ENCODE measurements at regions of chr17 and their contacts with region 1.

Region 1: GRCh38 chr17:1186923-1187771 is 7.4 kb upstream of the ABR start:
- DNase-seq: peak; percentile 74
- H3K4me3 ChIP-seq: no peak overlapping the region
- H3K27ac ChIP-seq: no peak overlapping the region
- H3K4me1 ChIP-seq: peaks cover 18% of the 10 kb centered on the region
- H3K27me3 ChIP-seq: no peaks in the 10 kb centered on the region
- CTCF ChIP-seq: peak; percentile 95 to 99

Region 2: DNA sequence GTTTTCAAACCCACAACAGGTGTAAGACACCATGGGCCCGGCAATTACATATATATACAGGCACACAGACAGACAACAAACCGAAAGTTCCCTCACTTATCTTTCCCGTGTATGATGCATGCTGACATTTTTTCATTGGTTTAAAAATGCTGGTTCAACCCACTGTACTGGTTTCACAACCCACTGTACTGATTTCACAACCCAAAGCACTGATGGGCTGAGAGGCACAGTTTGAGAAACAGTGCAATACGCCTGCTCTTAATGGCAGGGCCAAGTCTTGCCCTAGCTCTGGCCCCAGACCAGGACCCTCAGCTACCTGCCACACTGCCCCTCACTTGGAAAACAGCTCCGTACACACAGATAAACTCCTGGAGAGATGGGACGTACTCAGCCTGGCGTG is 88.8 kb before region 1 on chr17:
- CTCF ChIA-PET with region 1: no interaction called
- dilution Hi-C with region 1: no loop called
- in situ Hi-C with region 1: no loop called
- intact Hi-C with region 1: no loop called
- DNase-seq: peak; percentile 29
- H3K4me3 ChIP-seq: no peak overlapping the region
- H3K27ac ChIP-seq: no peak overlapping the region
- H3K4me1 ChIP-seq: no peaks in the 10 kb centered on the region
- H3K27me3 ChIP-seq: no peaks in the 10 kb centered on the region
- CTCF ChIP-seq: no peak

Region 3: DNA sequence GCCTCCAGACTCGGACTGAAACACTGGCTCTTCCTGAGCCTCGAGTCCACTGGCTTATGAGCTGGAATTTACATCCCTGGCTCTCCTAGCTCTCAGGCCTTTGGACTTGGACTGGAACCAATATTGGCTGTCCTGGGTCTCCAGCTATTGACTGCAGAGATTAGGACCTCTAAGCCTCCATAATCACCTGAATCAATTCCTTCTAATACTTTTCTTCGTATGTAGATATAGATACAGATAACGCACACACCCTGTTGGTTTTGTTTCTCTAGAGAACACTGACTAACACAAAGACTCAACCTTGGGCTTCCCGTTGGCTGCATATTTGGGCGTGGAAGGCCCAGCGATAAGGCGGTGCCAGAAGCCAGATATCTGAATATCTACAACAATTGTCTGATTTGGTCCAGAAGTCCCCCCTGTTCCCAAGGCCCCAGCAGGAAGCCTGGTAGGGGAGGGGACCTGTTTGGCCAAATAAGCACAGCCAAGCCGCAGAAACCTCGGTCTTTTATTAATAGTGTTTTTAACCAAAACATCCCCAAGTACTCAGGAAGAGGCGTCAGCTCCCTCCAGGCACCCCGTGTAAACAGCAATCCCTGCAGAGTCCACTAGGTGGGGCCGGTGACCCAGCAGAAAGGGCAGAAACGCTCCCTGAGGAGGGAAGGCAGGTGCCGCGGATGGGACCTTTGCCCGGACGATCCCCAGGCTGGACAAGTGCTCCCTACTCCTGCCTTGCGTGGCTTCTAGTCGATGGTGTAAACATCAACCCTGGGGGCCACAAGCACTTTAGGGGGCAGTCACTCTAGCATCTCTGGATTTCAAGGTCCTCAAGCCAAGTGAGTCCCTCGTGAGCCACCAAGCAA is 64.4 kb before region 1 on chr17:
- CTCF ChIA-PET with region 1: interaction called, 6 read pairs
- dilution Hi-C with region 1: loop called (anchors 5 kb)
- in situ Hi-C with region 1: loop called in 1 of 2 experiments (anchors 5 kb)
- intact Hi-C with region 1: loop called (anchors 1 kb)
- DNase-seq: peak; percentile 68
- H3K4me3 ChIP-seq: no peak overlapping the region
- H3K27ac ChIP-seq: no peak overlapping the region
- H3K4me1 ChIP-seq: peaks cover 20% of the 10 kb centered on the region
- H3K27me3 ChIP-seq: no peaks in the 10 kb centered on the region
- CTCF ChIP-seq: peak; percentile 77 to 86

Region 4: GRCh38 chr17:1147661-1148060 is 39.5 kb before region 1 on chr17:
- CTCF ChIA-PET with region 1: no interaction called
- dilution Hi-C with region 1: no loop called
- in situ Hi-C with region 1: no loop called
- intact Hi-C with region 1: loop called (anchors 1 kb)
- DNase-seq: peak; percentile 74
- H3K4me3 ChIP-seq: no peak overlapping the region
- H3K27ac ChIP-seq: no peak overlapping the region
- H3K4me1 ChIP-seq: no peaks in the 10 kb centered on the region
- H3K27me3 ChIP-seq: no peaks in the 10 kb centered on the region
- CTCF ChIP-seq: peak; percentile 61 to 81

Region 5: DNA sequence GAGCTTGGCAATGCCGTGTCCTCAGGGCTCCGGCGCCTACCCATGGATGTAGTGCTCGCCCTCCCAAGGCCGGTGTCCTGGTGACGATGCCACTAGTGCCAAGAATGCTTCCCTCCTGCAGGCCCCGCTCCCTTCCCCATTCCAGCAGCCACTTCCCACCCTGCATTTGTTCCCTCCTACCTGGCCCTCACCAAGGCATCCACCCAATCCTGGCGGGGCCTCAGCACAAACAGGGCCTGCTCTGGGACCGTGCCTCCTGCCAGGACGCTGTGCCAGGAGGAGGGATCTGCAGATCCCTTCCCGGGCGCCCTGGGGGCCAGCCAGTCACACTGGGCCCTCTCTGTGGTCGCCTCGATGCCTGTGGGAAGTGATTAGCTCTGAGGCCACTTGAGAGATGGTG is 32.4 kb before region 1 on chr17:
- CTCF ChIA-PET with region 1: no interaction called
- dilution Hi-C with region 1: loop called (anchors 5 kb)
- in situ Hi-C with region 1: no loop called
- intact Hi-C with region 1: no loop called
- DNase-seq: no peak
- H3K4me3 ChIP-seq: no peak overlapping the region
- H3K27ac ChIP-seq: no peak overlapping the region
- H3K4me1 ChIP-seq: no peaks in the 10 kb centered on the region
- H3K27me3 ChIP-seq: no peaks in the 10 kb centered on the region
- CTCF ChIP-seq: no peak

Region 6: DNA sequence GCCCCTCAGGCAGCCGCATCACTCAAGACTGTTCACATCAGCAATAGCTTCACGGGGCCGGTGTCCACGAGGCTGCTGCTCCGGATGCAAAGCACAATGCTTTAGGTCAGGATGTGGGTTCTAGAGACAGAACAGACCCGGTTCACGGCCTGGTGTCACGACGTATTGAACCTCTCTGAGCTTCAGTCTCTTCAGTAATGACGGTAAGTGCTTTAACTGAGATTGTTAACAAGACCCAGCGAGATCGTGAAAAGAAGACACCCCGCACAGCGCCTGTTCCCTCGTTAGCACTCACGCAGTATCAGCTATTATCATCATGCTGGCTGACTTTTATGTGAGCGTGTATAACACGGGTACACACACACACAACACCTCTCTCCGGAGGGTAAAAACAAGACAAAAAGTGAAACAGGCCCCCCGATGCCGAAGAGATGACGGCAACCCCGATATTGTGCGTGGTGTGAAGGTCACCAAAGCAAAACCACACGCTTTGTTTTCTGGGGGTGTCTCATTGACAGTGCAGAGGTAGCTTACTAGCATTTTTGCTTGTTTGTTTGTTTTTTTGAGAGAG is 14.1 kb after region 1 on chr17:
- CTCF ChIA-PET with region 1: interaction called, 24 read pairs
- dilution Hi-C with region 1: no loop called
- in situ Hi-C with region 1: no loop called
- intact Hi-C with region 1: no loop called
- DNase-seq: no peak
- H3K4me3 ChIP-seq: no peak overlapping the region
- H3K27ac ChIP-seq: no peak overlapping the region
- H3K4me1 ChIP-seq: peaks cover 5% of the 10 kb centered on the region
- H3K27me3 ChIP-seq: no peaks in the 10 kb centered on the region
- CTCF ChIP-seq: no peak

Region 7: DNA sequence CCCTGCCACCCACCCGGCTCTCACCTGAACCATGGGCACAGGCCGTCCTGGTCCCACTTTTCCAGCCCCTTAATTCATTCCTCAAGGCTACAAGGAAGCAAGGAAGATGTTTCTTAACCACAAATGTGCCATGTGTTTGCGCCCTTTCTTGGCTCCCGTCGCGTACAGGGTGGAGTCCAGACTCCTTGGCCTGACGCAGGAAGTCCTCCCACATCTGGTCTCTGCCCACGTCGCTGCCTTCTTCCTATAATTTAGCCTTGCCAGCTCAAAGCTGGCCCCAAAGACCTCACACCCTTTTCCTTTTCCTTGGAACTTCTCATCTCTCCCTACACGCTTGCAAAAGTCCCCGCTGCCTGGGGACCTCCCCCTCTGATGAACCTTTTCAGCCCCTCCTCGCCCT is 44.3 kb after region 1 on chr17:
- CTCF ChIA-PET with region 1: no interaction called
- dilution Hi-C with region 1: loop called (anchors 5 kb)
- in situ Hi-C with region 1: no loop called
- intact Hi-C with region 1: no loop called
- DNase-seq: peak; percentile 15
- H3K4me3 ChIP-seq: no peak overlapping the region
- H3K27ac ChIP-seq: no peak overlapping the region
- H3K4me1 ChIP-seq: peaks cover 6% of the 10 kb centered on the region
- H3K27me3 ChIP-seq: peaks cover 22% of the 10 kb centered on the region
- CTCF ChIP-seq: no peak

Measured in mammary epithelial cell (primary cell).